Sciatic nerve (tissue), 2 donors: ENCODE measurements at regions of chr22 and their contacts with region 1.

Region 1: DNA sequence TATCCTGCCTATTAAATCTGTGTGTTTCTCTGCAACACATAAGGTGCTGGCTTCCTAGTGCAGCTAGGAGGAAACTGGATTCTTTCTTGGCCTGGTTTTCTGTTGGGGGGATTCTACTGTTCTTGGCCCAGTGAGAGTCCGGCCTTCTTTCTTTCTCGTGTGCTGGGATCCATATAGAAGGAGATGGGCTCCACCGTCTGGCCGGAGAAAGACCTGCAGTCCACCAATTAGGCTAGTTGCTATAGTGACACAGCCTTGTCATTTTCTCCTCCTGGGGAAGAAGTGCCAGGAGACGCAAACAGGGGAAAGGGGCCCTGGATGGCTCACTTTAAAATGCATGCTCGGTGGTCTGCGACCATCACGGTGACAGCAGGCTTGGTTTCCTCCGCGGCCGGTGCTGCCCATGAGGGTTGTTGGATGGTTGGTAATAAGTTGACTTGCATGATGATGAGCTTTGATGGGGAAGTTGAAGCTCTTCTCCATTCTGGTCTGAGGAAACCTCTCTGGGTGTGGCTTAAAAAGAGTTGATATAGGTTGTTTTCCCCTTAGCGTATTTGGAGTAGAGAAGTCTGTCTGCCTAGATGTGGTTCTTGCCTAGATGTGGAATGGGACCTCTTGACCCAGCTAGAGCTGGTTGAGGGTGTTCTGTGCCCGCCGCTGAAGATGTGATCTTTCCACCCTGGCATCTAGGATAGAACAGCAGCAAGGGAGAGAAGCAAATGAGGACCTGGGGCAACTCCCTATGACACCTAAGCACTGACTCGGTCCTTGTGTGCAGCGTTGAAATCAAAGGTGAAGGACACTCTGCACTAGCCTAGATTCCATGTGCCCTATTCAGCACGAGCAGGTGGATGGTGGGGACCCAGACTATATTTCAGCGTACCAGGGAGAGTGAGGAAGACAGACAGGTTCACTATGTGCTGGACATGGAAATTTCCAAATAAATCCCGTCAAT is 1335.0 kb downstream of the BRD1 start:
- DNase-seq: peak; percentile 76
- ATAC-seq: peak; percentile 82

Region 2: DNA sequence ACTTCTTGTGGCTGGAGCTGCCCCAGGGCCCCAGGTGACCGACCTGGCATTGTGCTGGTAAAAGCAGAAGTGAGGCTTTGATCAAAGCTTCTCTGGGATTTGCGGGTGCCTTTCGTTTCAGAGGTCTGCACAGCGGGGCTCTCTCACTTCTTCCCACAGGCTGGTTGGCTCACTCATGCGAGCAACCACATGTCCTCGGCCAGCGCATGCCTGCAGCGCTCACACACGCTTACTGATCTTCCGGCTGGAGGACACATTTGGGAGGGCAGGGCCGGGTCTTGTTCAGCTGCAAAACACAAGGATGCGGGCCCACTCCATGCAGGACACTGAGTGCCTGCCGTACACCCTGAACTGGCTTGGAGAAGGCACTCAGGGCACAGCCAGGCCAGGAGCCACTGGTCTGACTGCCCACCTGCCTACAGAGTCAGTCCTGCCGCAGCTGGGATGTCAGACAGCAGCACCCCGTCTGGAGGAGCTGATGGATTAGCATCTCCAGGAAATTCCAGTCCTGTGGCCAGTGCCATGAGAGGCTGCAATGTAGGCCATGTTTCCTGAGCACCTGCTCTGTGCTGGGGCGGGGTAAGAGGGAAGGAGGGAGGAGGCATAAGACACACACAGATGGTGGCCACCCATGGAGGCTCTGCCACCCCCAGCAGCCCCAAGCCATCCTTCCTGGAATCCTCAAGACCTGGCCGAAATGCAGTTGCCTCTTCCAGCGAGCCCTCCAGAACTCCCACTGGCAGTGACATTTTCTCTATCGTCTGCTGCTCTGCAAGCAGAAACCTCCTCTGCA is 48.1 kb before region 1 on chr22:
- intact Hi-C with region 1: loop called (anchors 1 kb)
- DNase-seq: no peak
- ATAC-seq: no peak